OCI-LY7 (cell line): ENCODE measurements at regions of chr9 and their contacts with region 1.

Region 1: GRCh38 chr9:115306865-115307264 is 188.9 kb upstream of the TNC start:
- DNase-seq: no peak
- H3K4me3 ChIP-seq: no peak overlapping the region
- H3K27ac ChIP-seq: no peak overlapping the region
- H3K4me1 ChIP-seq: no peaks in the 10 kb centered on the region
- CTCF ChIP-seq: no peak

Region 2: GRCh38 chr9:115240676-115241075 is 66.2 kb before region 1 on chr9:
- CTCF ChIA-PET with region 1: no interaction called
- POLR2A ChIA-PET with region 1: no interaction called
- intact Hi-C with region 1: loop called (anchors 10 kb)
- DNase-seq: no peak
- H3K4me3 ChIP-seq: no peak overlapping the region
- H3K27ac ChIP-seq: no peak overlapping the region
- H3K4me1 ChIP-seq: no peaks in the 10 kb centered on the region
- CTCF ChIP-seq: no peak